ENCODE measurements at regions of chr6 and their contacts with region 1.

Region 1: GRCh38 chr6:27518881-27519795 is 46.2 kb upstream of the ZNF184 start:
- DNase-seq: peak; percentile 34 to 79 (median 68)
- ATAC-seq: peak; percentile 81
- H3K4me3 ChIP-seq: peak overlapping the region; percentile 96
- H3K4me3 Mint-ChIP-seq: peak overlapping the region; percentile 84 to 97 (median 91)
- H3K27ac ChIP-seq: peak overlapping the region; percentile 67
- H3K27ac Mint-ChIP-seq: peak overlapping the region; percentile 68 to 94 (median 84)
- H3K4me1 ChIP-seq: peaks cover 7 to 11% of the 10 kb centered on the region in 2 donors
- H3K4me1 Mint-ChIP-seq: peaks cover 0 to 31% (median 18%) of the 10 kb centered on the region in 7 donors
- H3K27me3 ChIP-seq: peaks cover 0 to 3% of the 10 kb centered on the region in 2 donors
- H3K27me3 Mint-ChIP-seq: peaks cover 0 to 40% (median 22%) of the 10 kb centered on the region in 5 donors

Region 2: DNA sequence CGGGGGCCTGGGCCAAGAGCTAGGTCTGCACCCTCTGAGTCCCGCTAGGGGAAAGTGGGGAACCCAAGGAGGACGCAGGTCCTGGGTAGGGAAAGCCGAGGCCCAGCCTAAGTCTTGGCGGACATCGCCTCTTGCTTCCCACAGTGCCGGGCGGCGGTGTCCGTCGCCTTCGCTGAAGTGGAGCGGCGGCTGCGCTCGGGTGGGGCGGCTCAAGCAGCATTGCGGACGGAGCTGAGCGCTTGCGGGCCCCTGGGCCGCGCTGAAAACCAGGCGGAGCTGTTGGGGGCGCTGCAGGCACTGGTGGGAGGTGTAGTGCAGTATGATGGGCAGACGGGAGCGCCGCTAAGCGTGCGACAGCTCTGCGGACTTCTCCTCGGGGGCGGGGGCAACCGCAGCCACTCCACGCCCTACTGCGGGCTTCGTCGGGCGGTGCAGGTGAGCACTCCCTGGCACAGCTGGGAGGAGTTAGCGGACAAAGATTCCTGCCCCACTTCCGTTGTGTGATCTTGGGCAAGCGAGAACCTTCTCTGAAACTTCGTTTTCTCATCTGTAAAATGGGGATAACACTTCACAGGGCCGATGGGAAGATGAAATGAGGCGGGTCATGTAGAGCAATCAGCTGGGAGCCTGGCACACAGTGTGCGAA is 267.4 kb before region 1 on chr6:
- CTCF ChIA-PET with region 1: no interaction called
- POLR2A ChIA-PET with region 1: no interaction called
- intact Hi-C with region 1: no loop called
- DNase-seq: peak; percentile 26 to 62 (median 41)
- ATAC-seq: peak; percentile 89
- H3K4me3 ChIP-seq: peak overlapping the region; percentile 51
- H3K4me3 Mint-ChIP-seq: peak overlapping the region; percentile 76 to 91 (median 83)
- H3K27ac ChIP-seq: no peak overlapping the region
- H3K27ac Mint-ChIP-seq: no peak overlapping the region
- H3K4me1 ChIP-seq: peaks cover 4 to 8% of the 10 kb centered on the region in 2 donors
- H3K4me1 Mint-ChIP-seq: peaks cover 4 to 12% (median 7%) of the 10 kb centered on the region in 7 donors
- H3K27me3 ChIP-seq: peaks cover 0 to 4% of the 10 kb centered on the region in 2 donors
- H3K27me3 Mint-ChIP-seq: peaks cover 50 to 69% (median 65%) of the 10 kb centered on the region in 5 donors

Region 3: GRCh38 chr6:27503436-27504030 is 15.6 kb before region 1 on chr6:
- CTCF ChIA-PET with region 1: interaction called, 9 read pairs
- POLR2A ChIA-PET with region 1: interaction called, 16 read pairs
- intact Hi-C with region 1: loop called (anchors 1 kb)
- DNase-seq: peak; percentile 73 to 86 (median 80)
- ATAC-seq: peak; percentile 75
- H3K4me3 ChIP-seq: peak overlapping the region; percentile 61
- H3K4me3 Mint-ChIP-seq: peak overlapping the region; percentile 85 to 99 (median 91)
- H3K27ac ChIP-seq: peak overlapping the region; percentile 57
- H3K27ac Mint-ChIP-seq: peak overlapping the region; percentile 82 to 97 (median 91)
- H3K4me1 ChIP-seq: peaks cover 6% of the 10 kb centered on the region in 2 donors
- H3K4me1 Mint-ChIP-seq: peaks cover 15 to 41% (median 36%) of the 10 kb centered on the region in 7 donors
- H3K27me3 ChIP-seq: no peaks in the 10 kb centered on the region
- H3K27me3 Mint-ChIP-seq: peaks cover 5 to 62% (median 11%) of the 10 kb centered on the region in 5 donors

Region 4: GRCh38 chr6:27882624-27883023 is 363.5 kb after region 1 on chr6:
- CTCF ChIA-PET with region 1: no interaction called
- POLR2A ChIA-PET with region 1: no interaction called
- intact Hi-C with region 1: no loop called
- DNase-seq: no peak
- ATAC-seq: no peak
- H3K4me3 ChIP-seq: no peak overlapping the region
- H3K4me3 Mint-ChIP-seq: no peak overlapping the region
- H3K27ac ChIP-seq: no peak overlapping the region
- H3K27ac Mint-ChIP-seq: no peak overlapping the region
- H3K4me1 ChIP-seq: no peaks in the 10 kb centered on the region
- H3K4me1 Mint-ChIP-seq: peaks cover 0 to 11% (median 0%) of the 10 kb centered on the region in 7 donors
- H3K27me3 ChIP-seq: no peaks in the 10 kb centered on the region
- H3K27me3 Mint-ChIP-seq: no peaks in the 10 kb centered on the region